HAP-1 (cell line): ENCODE measurements at regions of chr10 and their contacts with region 1.

Region 1: DNA sequence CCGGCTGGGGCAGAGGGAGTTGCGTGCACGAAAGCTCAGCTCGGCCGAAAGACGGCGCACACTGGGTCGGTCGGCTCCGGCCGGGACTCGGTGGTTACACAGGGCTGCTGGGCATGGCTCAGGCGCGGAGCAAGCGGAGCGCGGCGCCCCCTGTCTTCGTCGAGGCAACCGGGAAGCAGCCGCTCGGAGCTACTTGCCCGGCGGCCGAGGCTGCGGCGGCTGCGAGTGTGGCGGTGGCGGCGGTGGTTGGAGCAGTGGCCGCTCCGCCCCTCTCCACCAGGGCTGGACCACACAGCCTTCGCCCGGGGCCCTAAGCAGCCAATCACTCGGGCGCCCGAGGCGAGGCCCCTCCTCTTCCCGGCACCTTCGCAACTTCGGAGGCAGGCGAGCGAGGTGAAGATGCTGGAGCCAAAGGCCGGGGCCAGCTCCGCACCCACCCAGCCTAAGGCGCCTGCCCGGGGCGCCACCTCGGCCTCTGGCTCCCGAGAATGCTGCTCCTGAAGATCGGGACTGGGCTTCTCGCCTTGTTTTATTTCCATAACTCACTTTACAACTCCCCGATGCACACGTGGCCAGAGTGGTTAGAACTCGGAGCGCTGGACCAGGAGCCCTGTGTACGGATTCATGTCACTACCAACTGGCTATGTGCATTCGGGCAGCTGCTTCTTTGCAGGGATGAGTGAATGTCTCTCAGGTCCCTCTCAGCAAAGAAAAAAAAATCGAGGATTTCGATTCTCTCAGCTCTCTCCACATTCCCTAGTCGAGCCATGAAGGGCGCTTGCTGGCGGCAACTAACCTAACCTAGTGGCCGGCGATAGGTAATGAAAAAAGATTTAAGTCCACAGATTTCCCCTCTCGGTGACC is at the start of gene TLL2:
- DNase-seq: peak; percentile 81 to 91
- H3K4me3 ChIP-seq: peak within 1 kb of the TSS; percentile 43
- H3K4me1 ChIP-seq: peaks cover 5% of the 10 kb centered on the region
- H3K27me3 ChIP-seq: peaks cover 6% of the 10 kb centered on the region

Region 2: GRCh38 chr10:96395931-96396877 is 117.7 kb before region 1 on chr10:
- in situ Hi-C with region 1: loop called (anchors 5 kb)
- DNase-seq: peak; percentile 51 to 76
- H3K4me3 ChIP-seq: no peak overlapping the region
- H3K4me1 ChIP-seq: no peaks in the 10 kb centered on the region
- H3K27me3 ChIP-seq: peaks cover 45% of the 10 kb centered on the region